ENCODE measurements at regions of chr17 and their contacts with region 1.

Region 1: GRCh38 chr17:35088881-35089585 is 25.5 kb upstream of the RFFL start:
- DNase-seq: peak; percentile 95
- ATAC-seq: peak; percentile 77
- H3K4me3 Mint-ChIP-seq: peak overlapping the region; percentile 89
- H3K27ac Mint-ChIP-seq: peak overlapping the region; percentile 97
- H3K4me1 Mint-ChIP-seq: peaks cover 54% of the 10 kb centered on the region
- H3K27me3 Mint-ChIP-seq: no peaks in the 10 kb centered on the region

Region 2: DNA sequence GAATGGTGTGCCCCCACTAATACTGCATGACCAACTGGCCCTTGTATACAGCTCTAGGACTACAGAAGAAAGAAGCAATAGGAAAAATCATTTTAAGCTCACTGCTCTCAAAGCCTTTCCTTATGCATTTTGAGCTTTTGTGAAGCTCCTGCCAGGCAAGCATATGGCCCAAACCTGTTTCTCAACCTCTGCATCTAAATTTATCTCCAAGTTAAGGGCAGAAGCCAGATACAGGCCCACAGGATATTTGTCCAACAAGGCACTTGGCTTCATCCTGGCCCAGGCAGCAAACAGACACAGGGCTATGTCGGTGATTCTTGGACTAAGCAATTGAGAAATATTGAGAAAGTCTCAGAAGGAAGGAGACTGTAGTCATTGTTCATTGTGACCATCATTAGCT is 171.7 kb before region 1 on chr17:
- CTCF ChIA-PET with region 1: no interaction called
- POLR2A ChIA-PET with region 1: no interaction called
- intact Hi-C with region 1: no loop called
- DNase-seq: no peak
- ATAC-seq: no peak
- H3K4me3 Mint-ChIP-seq: no peak overlapping the region
- H3K27ac Mint-ChIP-seq: no peak overlapping the region
- H3K4me1 Mint-ChIP-seq: no peaks in the 10 kb centered on the region
- H3K27me3 Mint-ChIP-seq: no peaks in the 10 kb centered on the region

Region 3: GRCh38 chr17:34980681-34981537 is 108.1 kb before region 1 on chr17:
- CTCF ChIA-PET with region 1: interaction called, 14 read pairs
- POLR2A ChIA-PET with region 1: no interaction called
- intact Hi-C with region 1: loop called (anchors 1 kb)
- DNase-seq: peak; percentile 82
- ATAC-seq: peak; percentile 82
- H3K4me3 Mint-ChIP-seq: peak overlapping the region; percentile 86
- H3K27ac Mint-ChIP-seq: peak overlapping the region; percentile 93
- H3K4me1 Mint-ChIP-seq: peaks cover 50% of the 10 kb centered on the region
- H3K27me3 Mint-ChIP-seq: no peaks in the 10 kb centered on the region

Region 4: DNA sequence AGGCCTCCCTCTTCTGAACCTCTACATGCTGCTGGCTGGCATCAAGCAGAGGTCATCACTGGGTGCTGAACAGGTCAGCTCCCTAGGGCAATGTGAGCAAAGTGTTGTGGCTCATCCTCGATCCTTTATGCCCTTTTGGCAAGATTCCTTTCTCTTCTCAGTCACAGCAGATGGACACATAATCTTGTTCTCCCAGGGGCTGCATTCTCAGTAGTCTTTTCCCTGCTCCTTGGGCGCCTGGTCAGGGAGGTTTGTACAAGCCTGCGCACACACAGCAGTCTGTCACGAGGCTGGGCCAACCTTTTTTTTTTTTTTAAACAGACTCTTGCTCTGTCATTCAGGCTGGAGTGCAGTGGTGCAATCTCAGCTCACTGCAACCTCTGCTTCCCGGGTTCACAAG is 81.6 kb before region 1 on chr17:
- CTCF ChIA-PET with region 1: interaction called, 34 read pairs
- POLR2A ChIA-PET with region 1: no interaction called
- intact Hi-C with region 1: no loop called
- DNase-seq: no peak
- ATAC-seq: no peak
- H3K4me3 Mint-ChIP-seq: no peak overlapping the region
- H3K27ac Mint-ChIP-seq: peak overlapping the region; percentile 30
- H3K4me1 Mint-ChIP-seq: no peaks in the 10 kb centered on the region
- H3K27me3 Mint-ChIP-seq: no peaks in the 10 kb centered on the region

Region 5: GRCh38 chr17:35046740-35047283 is 42.2 kb before region 1 on chr17:
- CTCF ChIA-PET with region 1: interaction called, 12 read pairs
- POLR2A ChIA-PET with region 1: interaction called, 13 read pairs
- intact Hi-C with region 1: loop called (anchors 1 kb)
- DNase-seq: peak; percentile 78
- ATAC-seq: peak; percentile 95
- H3K4me3 Mint-ChIP-seq: peak overlapping the region; percentile 71
- H3K27ac Mint-ChIP-seq: peak overlapping the region; percentile 91
- H3K4me1 Mint-ChIP-seq: peaks cover 80% of the 10 kb centered on the region
- H3K27me3 Mint-ChIP-seq: no peaks in the 10 kb centered on the region

Region 6: DNA sequence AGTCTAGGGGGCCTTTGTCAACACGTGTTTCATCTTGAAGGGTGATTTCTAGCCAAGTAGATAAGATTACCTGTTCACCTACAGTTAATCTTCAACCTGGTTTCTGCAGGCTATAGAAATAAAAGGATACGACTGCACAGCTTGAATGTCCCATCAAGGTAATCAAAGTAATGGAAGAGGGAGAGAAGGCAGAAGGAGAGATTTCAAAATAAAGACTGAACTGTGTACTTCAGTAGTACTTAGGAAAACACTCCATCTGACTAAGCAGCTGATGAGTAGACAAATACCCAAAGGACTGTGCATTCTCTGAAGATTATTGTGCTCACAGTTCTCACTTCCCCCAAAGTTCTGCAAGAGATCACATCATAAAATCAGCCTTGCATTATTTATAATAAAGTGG is 19.7 kb before region 1 on chr17:
- CTCF ChIA-PET with region 1: interaction called, 21 read pairs
- POLR2A ChIA-PET with region 1: interaction called, 3 read pairs
- intact Hi-C with region 1: loop called (anchors 1 to 2 kb)
- DNase-seq: no peak
- ATAC-seq: peak; percentile 16
- H3K4me3 Mint-ChIP-seq: no peak overlapping the region
- H3K27ac Mint-ChIP-seq: no peak overlapping the region
- H3K4me1 Mint-ChIP-seq: peaks cover 72% of the 10 kb centered on the region
- H3K27me3 Mint-ChIP-seq: no peaks in the 10 kb centered on the region

Region 7: GRCh38 chr17:35578197-35578928 is 489.3 kb after region 1 on chr17 and contains the start of gene PEX12:
- CTCF ChIA-PET with region 1: no interaction called
- POLR2A ChIA-PET with region 1: interaction called, 3 read pairs
- intact Hi-C with region 1: loop called in 1 of 2 experiments (anchors 5 kb)
- DNase-seq: peak; percentile 92
- ATAC-seq: peak; percentile 93
- H3K4me3 Mint-ChIP-seq: peak within 1 kb of the TSS; percentile 96
- H3K27ac Mint-ChIP-seq: peak within 1 kb of the TSS; percentile 98
- H3K4me1 Mint-ChIP-seq: peaks cover 23% of the 10 kb centered on the region
- H3K27me3 Mint-ChIP-seq: no peaks in the 10 kb centered on the region
- total RNA-seq, gene PEX12: 5.7 to 6.1 TPM